Caco-2 (cell line): ENCODE measurements at regions of chr7 and their contacts with region 1.

Region 1: DNA sequence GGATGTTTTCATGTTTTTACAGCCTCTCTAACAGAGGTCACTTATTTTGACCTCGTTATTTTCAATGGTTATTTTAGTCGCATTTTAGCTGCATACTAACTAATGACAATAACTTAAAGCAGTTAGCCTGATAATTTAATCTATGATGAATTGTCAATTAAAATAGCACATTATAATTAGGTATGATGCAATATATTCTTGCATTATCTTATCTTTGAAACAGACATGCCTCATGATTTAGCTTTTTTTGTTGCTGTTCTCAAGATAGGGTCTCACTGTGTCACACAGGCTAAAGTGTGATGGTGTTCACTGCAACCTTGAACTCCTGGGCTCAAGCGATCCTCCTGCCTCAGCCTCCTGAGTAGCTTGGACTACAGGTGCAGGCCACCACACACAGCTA is 126.4 kb downstream of the KBTBD2 start:
- DNase-seq: no peak
- H3K4me3 ChIP-seq: no peak overlapping the region
- H3K4me3 Mint-ChIP-seq: no peak overlapping the region
- H3K27ac Mint-ChIP-seq: no peak overlapping the region
- H3K4me1 ChIP-seq: no peaks in the 10 kb centered on the region
- H3K4me1 Mint-ChIP-seq: no peaks in the 10 kb centered on the region
- H3K27me3 ChIP-seq: no peaks in the 10 kb centered on the region
- H3K27me3 Mint-ChIP-seq: peaks cover 6% of the 10 kb centered on the region
- CTCF ChIP-seq: no peak

Region 2: GRCh38 chr7:32942786-32943653 is 177.8 kb after region 1 on chr7:
- CTCF ChIA-PET with region 1: no interaction called
- POLR2A ChIA-PET with region 1: no interaction called
- intact Hi-C with region 1: loop called (anchors 2 kb)
- DNase-seq: peak; percentile 80 to 90
- H3K4me3 ChIP-seq: peak overlapping the region; percentile 62
- H3K4me3 Mint-ChIP-seq: peak overlapping the region; percentile 84
- H3K27ac Mint-ChIP-seq: no peak overlapping the region
- H3K4me1 ChIP-seq: peaks cover 10% of the 10 kb centered on the region; the same call in 1 of the 2 replicates
- H3K4me1 Mint-ChIP-seq: peaks cover 9% of the 10 kb centered on the region
- H3K27me3 ChIP-seq: no peaks in the 10 kb centered on the region
- H3K27me3 Mint-ChIP-seq: no peaks in the 10 kb centered on the region
- CTCF ChIP-seq: peak; percentile 46 to 48

Region 3: DNA sequence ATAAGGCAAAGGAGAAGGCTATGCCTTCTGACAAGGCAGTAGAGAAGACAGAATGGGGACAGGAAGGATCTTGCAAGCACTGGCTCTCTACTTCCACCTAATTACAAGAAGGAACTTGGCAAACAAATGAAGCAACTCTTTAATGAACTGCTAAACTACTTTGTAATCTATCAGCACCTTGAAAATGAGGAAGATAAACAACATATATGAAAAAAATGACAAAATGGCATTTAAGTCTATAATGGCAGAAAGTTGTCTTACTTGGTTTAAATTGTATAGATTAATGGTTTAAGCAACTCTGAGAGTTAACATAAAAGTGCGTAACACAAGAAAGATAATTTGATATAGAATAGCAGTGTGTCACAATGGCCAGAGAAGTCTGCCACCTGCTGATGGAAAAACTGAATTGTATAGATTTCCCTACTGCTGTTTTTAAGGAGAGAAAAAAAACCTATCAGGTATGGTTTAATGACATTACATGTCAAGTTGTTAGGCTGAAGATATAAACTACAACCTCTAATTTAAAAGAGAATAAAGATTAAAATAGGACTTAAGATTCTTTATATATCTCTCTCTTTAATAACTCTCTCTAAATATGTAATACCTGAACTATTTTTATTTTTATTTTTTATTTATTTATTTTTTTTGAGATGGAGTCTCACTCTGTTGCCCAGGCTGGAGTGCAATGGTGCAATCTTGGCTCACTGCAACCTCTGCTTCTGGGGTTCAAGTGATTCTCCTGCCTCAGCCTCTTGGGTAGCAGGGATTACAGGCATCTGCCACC is 285.5 kb after region 1 on chr7:
- CTCF ChIA-PET with region 1: no interaction called
- POLR2A ChIA-PET with region 1: no interaction called
- intact Hi-C with region 1: loop called (anchors 2 kb)
- DNase-seq: peak in 1 of 2 experiments; percentile 60
- H3K4me3 ChIP-seq: no peak overlapping the region
- H3K4me3 Mint-ChIP-seq: no peak overlapping the region
- H3K27ac Mint-ChIP-seq: no peak overlapping the region
- H3K4me1 ChIP-seq: no peaks in the 10 kb centered on the region
- H3K4me1 Mint-ChIP-seq: peaks cover 12% of the 10 kb centered on the region
- H3K27me3 ChIP-seq: no peaks in the 10 kb centered on the region
- H3K27me3 Mint-ChIP-seq: no peaks in the 10 kb centered on the region
- CTCF ChIP-seq: peak; percentile 37 to 66